PC-9 (cell line): ENCODE measurements at regions of chr3 and their contacts with region 1.

Region 1: GRCh38 chr3:8111069-8111798 is 390.4 kb upstream of the LMCD1 start:
- DNase-seq: peak in 1 of 2 experiments; percentile 37
- H3K4me3 ChIP-seq: no peak overlapping the region
- H3K27ac ChIP-seq: no peak overlapping the region
- H3K4me1 ChIP-seq: no peaks in the 10 kb centered on the region
- H3K27me3 ChIP-seq: no peaks in the 10 kb centered on the region
- CTCF ChIP-seq: peak; percentile 79

Region 2: GRCh38 chr3:8239718-8240695 is 128.8 kb after region 1 on chr3:
- CTCF ChIA-PET with region 1: no interaction called
- POLR2A ChIA-PET with region 1: no interaction called
- intact Hi-C with region 1: loop called (anchors 1 kb)
- DNase-seq: peak in 1 of 2 experiments; percentile 18
- H3K4me3 ChIP-seq: no peak overlapping the region
- H3K27ac ChIP-seq: no peak overlapping the region
- H3K4me1 ChIP-seq: no peaks in the 10 kb centered on the region
- H3K27me3 ChIP-seq: no peaks in the 10 kb centered on the region
- CTCF ChIP-seq: peak; percentile 85

Region 3: GRCh38 chr3:8301728-8302462 is 190.7 kb after region 1 on chr3:
- CTCF ChIA-PET with region 1: no interaction called
- POLR2A ChIA-PET with region 1: no interaction called
- intact Hi-C with region 1: loop called (anchors 5 kb)
- DNase-seq: peak; percentile 8 to 47
- H3K4me3 ChIP-seq: no peak overlapping the region
- H3K27ac ChIP-seq: no peak overlapping the region
- H3K4me1 ChIP-seq: no peaks in the 10 kb centered on the region
- H3K27me3 ChIP-seq: no peaks in the 10 kb centered on the region
- CTCF ChIP-seq: peak; percentile 74